B cell (primary cell): ENCODE measurements at regions of chr18 and their contacts with region 1.

Region 1: DNA sequence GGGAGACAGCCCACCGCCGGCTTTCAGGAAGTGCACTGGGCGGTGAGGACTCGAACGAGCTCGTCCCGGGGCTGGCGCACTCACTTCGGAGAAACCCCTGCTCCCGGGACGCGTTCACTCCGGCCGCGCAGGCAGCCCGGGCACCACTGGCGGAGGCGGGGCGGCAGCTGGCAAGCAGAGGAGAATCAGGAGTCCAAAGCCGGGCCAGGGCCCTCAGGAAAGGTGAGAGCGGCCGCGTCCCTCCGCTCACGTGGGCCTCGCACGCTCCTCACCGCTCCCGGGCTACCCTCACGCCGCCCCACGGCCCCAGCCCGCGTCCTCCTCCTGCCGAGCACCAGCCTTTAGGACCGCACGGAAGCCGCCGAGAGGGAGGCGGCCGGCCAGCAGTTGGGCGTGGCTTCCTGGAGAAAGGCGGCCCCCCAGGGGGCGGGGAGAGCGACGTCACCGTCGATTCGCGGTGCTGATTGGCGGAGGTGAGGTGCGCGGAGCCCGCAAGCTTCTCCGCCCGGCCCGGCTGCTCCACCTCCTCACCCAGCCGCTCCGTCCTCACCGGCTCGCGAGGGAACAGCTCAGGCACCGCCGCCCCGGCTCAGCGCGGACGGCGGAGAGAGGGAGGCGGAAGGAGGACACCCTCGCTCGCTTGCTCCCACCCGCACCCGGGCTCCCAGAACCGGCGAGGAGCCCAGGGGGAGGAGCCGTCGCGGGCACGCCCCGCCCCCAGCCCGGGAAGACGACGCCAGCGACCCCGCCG is at the start of gene ZCCHC2:
- DNase-seq: peak; percentile 99
- ATAC-seq: peak; percentile 74
- H3K4me3 ChIP-seq: peak within 1 kb of the TSS; percentile 77 to 88 (median 86)
- H3K4me3 Mint-ChIP-seq: peak within 1 kb of the TSS; percentile 97
- H3K27ac ChIP-seq: peak within 1 kb of the TSS; percentile 73 to 93
- H3K27ac Mint-ChIP-seq: peak within 1 kb of the TSS; percentile 93
- H3K4me1 ChIP-seq: peaks cover 28 to 29% of the 10 kb centered on the region in 2 donors
- H3K4me1 Mint-ChIP-seq: peaks cover 29% of the 10 kb centered on the region
- H3K27me3 ChIP-seq: no peaks in the 10 kb centered on the region
- H3K27me3 Mint-ChIP-seq: no peaks in the 10 kb centered on the region
- CTCF ChIP-seq: no peak
- total RNA-seq, gene ZCCHC2: 53.7 and 63.0 TPM in 2 replicates

Region 2: DNA sequence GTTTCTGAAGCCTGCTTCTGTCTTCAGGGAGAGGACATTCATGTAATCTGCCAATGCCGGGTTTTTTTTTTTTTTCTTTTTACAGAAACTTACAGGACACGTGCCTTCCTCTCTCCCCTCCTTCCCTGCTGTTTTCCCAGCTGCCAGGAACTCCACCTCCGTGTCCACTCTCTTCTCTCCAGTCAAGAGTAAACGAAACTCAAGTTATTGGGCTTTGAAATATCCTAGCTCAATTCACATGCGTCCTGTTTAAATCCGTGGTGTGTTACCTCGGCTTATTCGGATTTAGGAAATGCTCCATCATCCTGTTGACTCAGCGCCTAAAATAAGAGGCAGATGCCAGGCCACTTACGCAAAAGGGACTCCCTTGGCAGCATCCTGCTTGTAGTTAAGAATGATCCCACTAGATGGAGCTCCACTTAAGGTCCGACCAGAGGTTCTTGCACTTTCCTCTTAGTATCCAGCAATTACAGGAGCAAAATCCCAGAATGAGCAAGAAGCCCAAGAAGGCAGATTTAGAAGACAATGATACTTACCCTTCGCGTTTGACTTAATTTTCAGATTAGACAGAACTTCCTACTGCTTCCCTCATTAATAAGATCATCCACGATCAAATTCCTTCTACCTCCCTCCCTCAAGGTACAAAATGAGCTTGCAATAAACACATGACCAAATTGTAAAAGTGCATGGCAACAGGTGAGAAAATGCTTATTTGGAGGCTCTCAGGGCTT is 97.0 kb before region 1 on chr18:
- CTCF ChIA-PET with region 1: interaction called, 11 read pairs
- POLR2A ChIA-PET with region 1: no interaction called
- intact Hi-C with region 1: loop called (anchors 1 kb)
- DNase-seq: peak; percentile 78
- ATAC-seq: peak; percentile 69
- H3K4me3 ChIP-seq: no peak overlapping the region
- H3K4me3 Mint-ChIP-seq: peak overlapping the region; percentile 29
- H3K27ac ChIP-seq: no peak overlapping the region
- H3K27ac Mint-ChIP-seq: no peak overlapping the region
- H3K4me1 ChIP-seq: peaks cover 5 to 8% of the 10 kb centered on the region in 2 donors
- H3K4me1 Mint-ChIP-seq: peaks cover 7% of the 10 kb centered on the region
- H3K27me3 ChIP-seq: peaks cover 0 to 3% (median 0%) of the 10 kb centered on the region in 4 experiments
- H3K27me3 Mint-ChIP-seq: peaks cover 9% of the 10 kb centered on the region
- CTCF ChIP-seq: peak; percentile 88

Region 3: DNA sequence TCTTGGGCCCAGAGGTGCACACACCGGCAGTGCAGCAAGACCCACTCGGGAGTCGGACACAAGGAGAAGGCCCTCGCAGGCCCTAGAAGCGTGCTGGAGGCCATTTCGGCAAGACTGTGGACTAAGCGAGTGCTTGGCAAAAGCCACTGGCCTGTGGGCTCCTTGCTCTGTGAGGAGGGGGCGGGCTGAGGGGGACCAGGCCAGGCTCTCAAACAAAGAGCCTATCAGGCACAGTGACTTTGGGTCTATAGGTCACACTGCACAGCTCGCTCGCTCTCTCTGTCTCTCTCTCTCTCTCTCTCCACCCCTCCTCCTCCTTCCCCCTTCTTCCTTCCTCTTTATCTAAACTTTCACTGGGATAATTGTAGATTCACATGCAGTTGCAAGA is 23.4 kb before region 1 on chr18:
- CTCF ChIA-PET with region 1: interaction called, 4 read pairs
- POLR2A ChIA-PET with region 1: interaction called, 11 read pairs
- intact Hi-C with region 1: no loop called
- DNase-seq: no peak
- ATAC-seq: no peak
- H3K4me3 ChIP-seq: no peak overlapping the region
- H3K4me3 Mint-ChIP-seq: no peak overlapping the region
- H3K27ac ChIP-seq: no peak overlapping the region
- H3K27ac Mint-ChIP-seq: no peak overlapping the region
- H3K4me1 ChIP-seq: peaks cover 11 to 13% of the 10 kb centered on the region in 2 donors
- H3K4me1 Mint-ChIP-seq: peaks cover 15% of the 10 kb centered on the region
- H3K27me3 ChIP-seq: peaks cover 0 to 5% (median 0%) of the 10 kb centered on the region in 4 experiments
- H3K27me3 Mint-ChIP-seq: peaks cover 13% of the 10 kb centered on the region
- CTCF ChIP-seq: no peak

Region 4: DNA sequence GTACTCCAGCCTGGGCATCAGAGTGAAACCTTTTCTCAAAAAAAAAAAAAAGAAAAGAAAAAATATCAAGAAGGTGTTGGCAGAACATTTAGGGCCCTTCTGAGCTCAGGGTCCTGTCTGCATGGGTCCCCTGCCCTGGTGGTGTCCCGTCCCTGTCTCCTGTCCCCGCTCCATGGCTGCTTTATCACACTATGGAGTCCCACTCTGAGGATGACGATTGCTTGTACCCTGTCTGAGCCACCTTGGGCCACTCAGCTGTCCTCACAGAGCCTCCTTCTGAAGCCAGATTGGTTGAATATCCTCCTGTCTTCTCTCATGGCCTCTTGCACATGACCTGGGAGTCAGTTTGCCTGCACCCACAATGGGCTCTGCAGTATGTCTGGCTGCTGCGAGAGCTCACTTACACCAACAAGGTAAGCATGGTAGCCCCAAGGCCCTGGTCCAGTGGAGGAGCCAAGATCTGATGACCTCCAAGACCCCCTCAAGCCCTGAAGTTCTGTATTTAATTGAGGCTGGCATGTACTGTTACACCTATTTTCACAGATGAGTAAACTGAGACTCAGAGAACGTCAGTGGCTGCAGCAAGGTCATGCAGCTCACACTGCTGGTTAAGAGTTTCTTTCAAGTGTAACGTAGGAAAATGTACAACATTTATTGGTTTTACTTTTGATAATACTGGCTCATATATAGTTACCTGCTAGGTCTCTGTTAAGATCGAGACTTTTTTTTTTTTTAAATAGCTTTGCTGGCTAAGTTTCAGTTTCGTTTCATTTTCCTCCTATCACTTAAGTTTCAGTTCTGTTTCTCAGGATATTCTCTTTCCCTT is 16.8 kb before region 1 on chr18:
- CTCF ChIA-PET with region 1: interaction called, 10 read pairs
- POLR2A ChIA-PET with region 1: interaction called, 11 read pairs
- intact Hi-C with region 1: loop called (anchors 1 kb)
- DNase-seq: peak; percentile 78
- ATAC-seq: peak; percentile 84
- H3K4me3 ChIP-seq: peak overlapping the region; percentile 27 to 58 (median 56)
- H3K4me3 Mint-ChIP-seq: peak overlapping the region; percentile 79
- H3K27ac ChIP-seq: peak overlapping the region; percentile 61 to 72
- H3K27ac Mint-ChIP-seq: peak overlapping the region; percentile 95
- H3K4me1 ChIP-seq: peaks cover 15 to 16% of the 10 kb centered on the region in 2 donors
- H3K4me1 Mint-ChIP-seq: peaks cover 13% of the 10 kb centered on the region
- H3K27me3 ChIP-seq: no peaks in the 10 kb centered on the region
- H3K27me3 Mint-ChIP-seq: no peaks in the 10 kb centered on the region
- CTCF ChIP-seq: no peak

Region 5: DNA sequence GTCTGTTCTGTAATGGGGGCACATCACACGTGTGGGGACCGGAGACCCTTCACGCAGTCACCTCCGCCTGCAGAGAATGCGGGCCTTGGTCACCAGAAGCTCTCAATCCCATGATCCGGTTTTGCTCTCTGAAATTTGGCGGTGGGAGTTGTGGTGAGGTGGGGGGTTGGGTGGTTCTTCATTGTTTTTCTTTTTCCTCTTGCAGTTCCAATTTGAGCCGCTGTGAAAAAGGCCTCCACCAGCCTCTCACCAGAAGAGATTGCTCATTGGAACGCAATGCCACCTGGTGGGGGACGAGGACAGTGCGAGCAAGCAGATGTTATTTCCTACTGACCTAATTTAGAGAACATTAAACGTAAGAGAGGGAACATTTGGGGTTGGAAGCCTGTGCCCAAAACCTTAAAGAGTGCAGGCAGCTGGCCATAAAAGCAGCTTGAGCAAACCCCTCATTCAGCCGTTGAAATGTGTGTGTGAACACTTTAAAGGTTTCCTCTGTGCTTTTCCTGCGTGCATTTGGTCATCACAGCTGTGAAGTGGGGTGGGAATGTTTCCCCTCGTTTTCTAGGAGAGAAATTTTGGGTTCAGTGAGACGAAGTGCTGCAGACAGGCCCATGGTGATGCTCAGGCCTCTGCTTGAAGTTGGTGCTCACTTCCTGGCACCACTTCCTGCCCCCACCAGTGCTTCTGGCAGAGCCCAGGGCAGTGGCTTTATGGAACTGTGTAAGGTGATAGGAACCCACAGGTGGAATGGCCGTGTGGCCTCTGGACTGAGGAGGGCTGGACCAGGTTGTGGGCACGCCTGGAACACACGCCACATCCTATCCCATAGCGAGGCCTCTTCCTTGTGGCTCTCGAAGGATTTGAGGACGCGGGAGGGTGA is 61.8 kb after region 1 on chr18:
- CTCF ChIA-PET with region 1: interaction called, 5 read pairs
- POLR2A ChIA-PET with region 1: no interaction called
- intact Hi-C with region 1: loop called (anchors 1 kb)
- DNase-seq: peak; percentile 88
- ATAC-seq: peak; percentile 94
- H3K4me3 ChIP-seq: no peak overlapping the region
- H3K4me3 Mint-ChIP-seq: peak overlapping the region; percentile 35
- H3K27ac ChIP-seq: no peak overlapping the region
- H3K27ac Mint-ChIP-seq: peak overlapping the region; percentile 11
- H3K4me1 ChIP-seq: peaks cover 13 to 20% of the 10 kb centered on the region in 2 donors
- H3K4me1 Mint-ChIP-seq: peaks cover 16% of the 10 kb centered on the region
- H3K27me3 ChIP-seq: no peaks in the 10 kb centered on the region
- H3K27me3 Mint-ChIP-seq: no peaks in the 10 kb centered on the region
- CTCF ChIP-seq: peak; percentile 94

Region 6: DNA sequence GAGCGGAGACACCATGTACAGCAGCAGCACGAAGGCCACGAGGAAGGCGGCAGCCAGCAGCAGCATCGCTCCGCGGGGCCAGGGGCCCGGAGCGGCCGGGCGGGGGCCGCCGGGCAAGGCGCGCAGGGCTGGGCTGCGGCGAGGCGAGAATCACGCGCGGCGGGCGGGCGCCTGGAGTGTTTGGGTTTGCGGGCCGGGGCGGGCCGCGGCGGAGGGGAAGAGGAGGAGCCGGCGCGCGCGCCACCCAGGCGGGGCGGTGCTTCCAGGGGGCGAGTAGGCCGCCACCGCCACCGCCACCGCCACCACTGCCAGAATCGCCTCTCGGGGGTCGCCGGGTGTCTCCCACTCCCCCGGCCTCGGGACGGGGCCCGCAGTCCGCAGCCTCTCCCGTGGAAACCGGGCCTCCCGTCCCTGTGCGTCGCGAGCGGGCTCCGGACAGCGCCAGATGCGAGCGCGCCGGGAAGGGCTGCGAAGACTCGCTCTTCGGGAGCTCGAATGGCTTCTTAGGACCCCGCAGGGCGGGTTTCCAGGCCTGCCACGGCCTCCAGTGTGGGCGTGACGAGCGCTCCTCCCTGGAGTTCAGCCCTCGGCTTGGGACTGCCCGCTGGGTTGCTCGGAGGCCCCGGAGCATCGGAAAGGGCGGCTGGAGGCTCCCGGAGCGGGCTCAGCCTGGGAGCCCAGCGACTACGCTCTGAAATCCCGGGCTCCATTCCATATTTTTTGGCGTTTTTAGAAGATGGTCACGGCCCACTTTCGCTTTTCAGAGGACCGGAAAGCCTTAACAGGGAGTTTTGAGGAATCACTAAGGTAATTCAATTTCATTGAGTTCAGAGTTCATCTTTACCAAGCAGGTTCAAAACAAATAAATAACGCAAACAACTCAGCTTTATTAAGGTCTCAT is 844.6 kb after region 1 on chr18 and contains the start of gene KDSR:
- CTCF ChIA-PET with region 1: no interaction called
- POLR2A ChIA-PET with region 1: no interaction called
- intact Hi-C with region 1: loop called (anchors 2 kb)
- DNase-seq: peak; percentile 89
- ATAC-seq: peak; percentile 93
- H3K4me3 ChIP-seq: peak within 1 kb of the TSS; percentile 83 to 94 (median 85)
- H3K4me3 Mint-ChIP-seq: peak within 1 kb of the TSS; percentile 90
- H3K27ac ChIP-seq: peak within 1 kb of the TSS; percentile 51 to 71
- H3K27ac Mint-ChIP-seq: peak within 1 kb of the TSS; percentile 89
- H3K4me1 ChIP-seq: peaks cover 11 to 13% of the 10 kb centered on the region in 2 donors
- H3K4me1 Mint-ChIP-seq: peaks cover 26% of the 10 kb centered on the region
- H3K27me3 ChIP-seq: no peaks in the 10 kb centered on the region
- H3K27me3 Mint-ChIP-seq: no peaks in the 10 kb centered on the region
- CTCF ChIP-seq: no peak
- total RNA-seq, gene KDSR: 21.1 and 26.4 TPM in 2 replicates